CD14-positive monocyte (primary cell): ENCODE measurements at regions of chr3 and their contacts with region 1.

Region 1: DNA sequence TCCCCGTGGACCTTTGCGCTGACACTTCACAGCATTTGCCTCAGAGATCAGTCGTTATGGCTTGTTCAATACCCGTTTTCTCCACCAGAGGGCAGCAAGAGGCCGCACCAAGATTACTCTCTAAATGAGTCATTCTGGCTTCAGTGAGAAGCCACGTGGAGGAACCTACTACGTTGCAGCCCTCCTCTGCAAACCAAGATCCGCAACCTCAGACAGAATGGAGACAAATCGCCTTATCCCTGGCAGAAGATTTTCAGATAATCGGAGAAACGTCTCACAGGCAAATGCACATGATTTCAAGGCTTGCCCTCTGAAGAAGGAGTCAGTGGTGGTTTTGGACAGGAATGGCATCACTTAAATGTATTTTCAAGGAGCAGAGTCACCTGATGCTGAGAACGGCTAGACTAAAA is 60.5 kb downstream of the GTPBP8 start:
- DNase-seq: peak; percentile 80 to 91 (median 83)
- H3K4me3 ChIP-seq: peak overlapping the region in 1 of 3 experiments; percentile 32
- H3K4me3 Mint-ChIP-seq: no peak overlapping the region
- H3K27ac ChIP-seq: no peak overlapping the region
- H3K27ac Mint-ChIP-seq: no peak overlapping the region
- H3K4me1 ChIP-seq: peaks cover 51 to 54% of the 10 kb centered on the region in 2 donors
- H3K4me1 Mint-ChIP-seq: no peaks in the 10 kb centered on the region
- H3K27me3 ChIP-seq: no peaks in the 10 kb centered on the region
- H3K27me3 Mint-ChIP-seq: no peaks in the 10 kb centered on the region
- CTCF ChIP-seq: peak; percentile 88

Region 2: GRCh38 chr3:113241292-113242095 is 190.2 kb after region 1 on chr3:
- intact Hi-C with region 1: no loop called
- DNase-seq: no peak
- H3K4me3 ChIP-seq: no peak overlapping the region
- H3K4me3 Mint-ChIP-seq: no peak overlapping the region
- H3K27ac ChIP-seq: no peak overlapping the region
- H3K27ac Mint-ChIP-seq: no peak overlapping the region
- H3K4me1 ChIP-seq: peaks cover 0 to 8% of the 10 kb centered on the region in 2 donors
- H3K4me1 Mint-ChIP-seq: peaks cover 15% of the 10 kb centered on the region
- H3K27me3 ChIP-seq: no peaks in the 10 kb centered on the region
- H3K27me3 Mint-ChIP-seq: peaks cover 0 to 10% (median 3%) of the 10 kb centered on the region in 3 donors
- CTCF ChIP-seq: no peak

Region 3: DNA sequence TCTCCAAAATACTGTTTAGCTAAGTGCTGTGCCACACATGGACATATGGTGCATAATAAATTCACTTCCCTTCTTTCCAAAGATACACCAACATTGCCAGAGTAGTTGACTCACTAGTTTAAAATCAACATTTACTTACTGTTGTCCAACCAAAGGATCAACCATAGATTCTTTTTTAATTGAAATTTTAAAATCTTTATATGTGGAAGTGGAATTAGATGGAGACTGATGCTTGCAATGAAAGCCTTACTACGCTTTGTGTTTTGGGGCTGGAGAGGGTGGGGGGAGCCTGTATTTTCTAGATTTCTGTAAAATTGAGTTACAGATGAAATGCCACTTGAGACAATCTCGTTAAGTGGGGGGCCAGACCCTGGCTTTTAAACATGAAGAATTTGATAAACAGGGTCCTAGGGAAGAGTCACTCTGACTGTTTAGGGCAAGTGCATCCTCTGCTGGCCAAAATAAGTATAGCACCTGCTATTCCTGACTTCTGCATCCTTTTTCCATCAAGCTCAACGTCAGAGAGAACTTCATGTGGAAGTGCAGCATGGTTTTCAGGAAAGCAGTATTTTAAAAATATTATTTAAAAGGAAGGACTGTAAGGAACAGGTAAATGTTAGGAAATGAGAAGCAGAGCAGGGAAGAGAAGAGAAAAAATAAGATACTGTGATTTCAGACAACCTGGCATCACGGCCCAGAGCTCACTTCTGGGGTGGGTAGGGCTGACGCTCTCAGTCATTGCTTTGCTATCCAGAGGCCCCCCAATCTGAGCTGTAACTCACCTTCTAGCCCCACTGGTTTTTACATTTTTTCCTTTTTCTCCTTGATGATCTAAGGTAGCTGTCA is 236.7 kb after region 1 on chr3:
- intact Hi-C with region 1: loop called (anchors 1 to 2 kb)
- DNase-seq: peak; percentile 44 to 63 (median 53)
- H3K4me3 ChIP-seq: no peak overlapping the region
- H3K4me3 Mint-ChIP-seq: no peak overlapping the region
- H3K27ac ChIP-seq: no peak overlapping the region
- H3K27ac Mint-ChIP-seq: no peak overlapping the region
- H3K4me1 ChIP-seq: peaks cover 0 to 9% of the 10 kb centered on the region in 2 donors
- H3K4me1 Mint-ChIP-seq: peaks cover 12% of the 10 kb centered on the region
- H3K27me3 ChIP-seq: no peaks in the 10 kb centered on the region
- H3K27me3 Mint-ChIP-seq: peaks cover 2 to 8% (median 5%) of the 10 kb centered on the region in 3 donors
- CTCF ChIP-seq: peak; percentile 99

Region 4: GRCh38 chr3:113575206-113575605 is 523.9 kb after region 1 on chr3:
- intact Hi-C with region 1: loop called in 1 of 2 experiments (anchors 10 kb)
- DNase-seq: no peak
- H3K4me3 ChIP-seq: no peak overlapping the region
- H3K4me3 Mint-ChIP-seq: no peak overlapping the region
- H3K27ac ChIP-seq: no peak overlapping the region
- H3K27ac Mint-ChIP-seq: no peak overlapping the region
- H3K4me1 ChIP-seq: no peaks in the 10 kb centered on the region
- H3K4me1 Mint-ChIP-seq: peaks cover 4% of the 10 kb centered on the region
- H3K27me3 ChIP-seq: no peaks in the 10 kb centered on the region
- H3K27me3 Mint-ChIP-seq: peaks cover 0 to 2% (median 0%) of the 10 kb centered on the region in 3 donors
- CTCF ChIP-seq: no peak

Region 5: DNA sequence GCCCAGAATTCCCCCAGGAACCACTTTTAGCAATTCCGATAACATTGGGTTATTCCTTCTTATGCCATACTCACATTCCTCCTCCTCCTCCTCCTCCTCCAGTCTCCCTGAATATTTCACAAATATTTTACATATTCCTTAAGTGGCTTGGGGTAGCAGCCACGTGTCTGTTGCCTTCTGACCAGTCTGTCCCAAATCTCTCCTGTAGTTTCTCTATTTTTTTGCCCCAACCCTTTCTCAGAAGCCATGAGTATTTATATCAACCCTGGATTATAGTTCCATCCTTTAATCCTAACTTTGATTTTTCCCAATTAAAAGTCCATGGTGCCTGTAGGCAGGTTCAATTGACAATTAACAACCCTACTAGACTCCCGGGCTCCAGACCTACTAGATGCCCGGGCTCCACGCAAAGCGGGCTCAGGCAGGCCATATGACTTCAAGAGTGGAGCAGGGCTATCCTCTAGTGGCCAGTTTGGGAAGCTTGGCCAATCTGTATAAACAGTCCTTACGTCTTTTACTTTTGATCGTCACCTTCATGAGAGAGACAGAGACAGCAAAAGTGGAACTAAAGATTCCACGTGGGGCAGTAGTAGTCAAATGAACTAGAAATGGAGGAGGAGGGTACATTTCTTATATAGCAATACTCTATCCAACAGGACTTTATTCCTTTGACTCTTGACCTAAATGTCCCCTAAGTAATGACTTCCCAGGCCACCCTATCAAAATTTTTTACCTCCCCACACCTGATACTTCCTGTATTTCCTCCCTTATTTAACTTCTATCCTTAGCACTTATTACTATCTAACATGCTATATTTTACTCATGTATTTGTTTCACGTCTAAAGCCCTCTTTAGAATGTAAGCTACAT is 575.4 kb after region 1 on chr3:
- intact Hi-C with region 1: loop called (anchors 5 kb)
- DNase-seq: peak; percentile 64 to 82 (median 76)
- H3K4me3 ChIP-seq: peak overlapping the region in 2 of 3 experiments; percentile 14 to 68
- H3K4me3 Mint-ChIP-seq: peak overlapping the region; percentile 75 to 89
- H3K27ac ChIP-seq: peak overlapping the region in 1 of 2 donors; percentile 77
- H3K27ac Mint-ChIP-seq: peak overlapping the region; percentile 89 to 94 (median 93)
- H3K4me1 ChIP-seq: peaks cover 23 to 34% of the 10 kb centered on the region in 2 donors
- H3K4me1 Mint-ChIP-seq: peaks cover 38% of the 10 kb centered on the region
- H3K27me3 ChIP-seq: no peaks in the 10 kb centered on the region
- H3K27me3 Mint-ChIP-seq: peaks cover 0 to 4% (median 1%) of the 10 kb centered on the region in 3 donors
- CTCF ChIP-seq: peak; percentile 95